Gastrocnemius medialis (tissue), 4 donors: ENCODE measurements at regions of chr22 and their contacts with region 1.

Region 1: DNA sequence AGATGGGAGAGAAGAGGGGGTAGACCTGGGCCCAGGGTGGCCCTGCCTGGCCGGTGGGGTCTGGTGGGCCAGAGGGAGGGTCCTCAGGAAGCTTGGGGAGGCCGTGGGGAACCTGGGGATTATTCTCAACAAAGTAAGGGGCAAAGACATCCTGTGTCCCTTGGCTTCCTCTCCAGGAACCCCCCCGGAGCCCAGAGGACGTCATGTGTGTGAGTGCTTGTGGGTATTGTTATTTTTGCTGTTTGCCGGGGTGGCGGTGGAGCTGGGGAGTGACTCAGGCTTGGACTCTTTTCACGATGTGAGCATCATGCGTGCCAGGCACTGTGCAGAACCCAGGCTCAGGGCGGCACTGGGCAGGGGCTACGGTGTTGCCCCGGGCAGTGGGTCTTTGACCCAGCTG is 982 bp upstream of the SHANK3 start:
- DNase-seq: no peak
- ATAC-seq: peak in 1 of 2 donors; percentile 19
- H3K4me3 ChIP-seq: peak overlapping the region in 1 of 4 donors; percentile 54
- H3K27ac ChIP-seq: peak overlapping the region; percentile 40 to 81 (median 76)
- H3K4me1 ChIP-seq: peaks cover 0 to 4% of the 10 kb centered on the region in 2 donors
- H3K27me3 ChIP-seq: peaks cover 21 to 48% (median 29%) of the 10 kb centered on the region in 3 donors
- CTCF ChIP-seq: no peak
- POLR2A ChIP-seq: no peak

Region 2: DNA sequence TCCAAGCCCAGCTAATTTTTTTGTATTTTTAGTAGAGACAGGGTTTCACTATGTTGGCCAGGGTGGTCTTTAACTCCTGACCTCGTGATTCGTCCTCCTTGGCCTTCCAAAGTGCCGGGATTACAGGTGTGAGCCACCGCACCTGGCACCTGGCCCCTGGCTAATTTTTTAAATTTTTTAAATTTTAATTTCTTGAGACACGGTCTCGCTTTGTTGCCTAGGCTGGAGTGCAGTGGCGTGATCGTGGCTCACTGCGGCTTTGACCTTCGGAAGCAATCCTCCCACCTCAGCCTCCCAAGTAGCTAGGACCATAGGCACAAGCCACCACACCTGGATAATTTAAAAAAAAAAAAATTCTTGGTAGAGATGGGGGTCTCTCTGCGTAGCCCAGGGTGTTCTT is 313.9 kb before region 1 on chr22:
- in situ Hi-C with region 1: no loop called
- intact Hi-C with region 1: no loop called
- DNase-seq: no peak
- ATAC-seq: no peak
- H3K4me3 ChIP-seq: no peak overlapping the region
- H3K27ac ChIP-seq: no peak overlapping the region
- H3K4me1 ChIP-seq: peaks cover 0 to 6% of the 10 kb centered on the region in 2 donors
- H3K27me3 ChIP-seq: no peaks in the 10 kb centered on the region
- CTCF ChIP-seq: no peak
- POLR2A ChIP-seq: no peak

Region 3: DNA sequence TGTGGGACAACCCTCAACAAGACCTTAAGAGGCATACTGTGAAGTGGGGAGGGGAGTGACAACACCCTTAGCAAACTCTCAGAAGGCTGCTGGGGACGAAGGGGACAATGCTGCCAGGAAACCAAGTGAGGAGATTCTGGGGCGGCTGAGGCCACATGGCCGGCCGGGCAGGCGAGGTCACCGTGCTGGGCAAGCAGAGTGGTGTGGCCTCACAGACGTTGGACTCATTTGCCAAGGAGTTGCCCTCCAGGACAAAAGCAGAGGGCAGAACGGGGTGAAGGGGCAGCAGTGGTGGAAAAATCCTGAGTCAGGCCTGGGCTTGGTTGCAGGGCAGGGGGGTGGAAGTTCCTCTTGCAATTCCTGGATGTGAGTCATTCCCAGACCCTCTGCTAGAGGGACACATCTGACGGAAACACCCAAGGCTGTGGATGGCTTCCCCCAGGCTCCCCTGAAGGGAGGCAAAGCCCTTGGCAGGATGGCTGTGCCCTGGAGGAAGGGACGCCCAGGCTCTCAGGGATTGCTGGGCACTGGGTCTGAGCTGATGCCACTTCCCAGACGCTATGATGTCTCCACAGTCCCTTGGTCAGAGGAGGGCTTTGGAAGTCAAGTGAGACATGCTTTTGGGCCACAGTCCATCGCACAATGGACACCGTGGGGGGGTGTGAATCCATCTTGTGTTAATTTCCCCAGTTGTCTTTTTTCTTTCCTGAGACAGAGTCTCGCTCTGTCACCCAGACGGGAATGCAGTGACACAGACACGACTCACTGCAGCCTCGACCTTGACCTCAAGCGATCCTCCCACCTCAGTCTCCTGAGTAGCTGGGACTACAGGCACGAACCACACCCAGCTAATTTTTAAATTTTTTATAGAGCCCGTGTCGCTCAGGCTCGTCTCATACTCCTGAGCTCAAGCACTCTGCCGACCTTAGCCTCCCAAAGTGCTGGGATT is 15.2 kb before region 1 on chr22:
- in situ Hi-C with region 1: no loop called
- intact Hi-C with region 1: loop called (anchors 1 kb)
- DNase-seq: no peak
- ATAC-seq: peak; percentile 64 to 74
- H3K4me3 ChIP-seq: peak overlapping the region in 1 of 4 donors; percentile 28
- H3K27ac ChIP-seq: peak overlapping the region; percentile 51 to 71 (median 62)
- H3K4me1 ChIP-seq: no peaks in the 10 kb centered on the region
- H3K27me3 ChIP-seq: peaks cover 0 to 17% (median 4%) of the 10 kb centered on the region in 3 donors
- CTCF ChIP-seq: no peak
- POLR2A ChIP-seq: peak in 1 of 2 donors; percentile 24